B cell (primary cell): ENCODE measurements at regions of chr14 and their contacts with region 1.

Region 1: GRCh38 chr14:69673578-69674305 is 62.3 kb downstream of the SUSD6 start:
- DNase-seq: no peak
- ATAC-seq: peak; percentile 50
- H3K4me3 ChIP-seq: peak overlapping the region in 1 of 5 experiments; percentile 38
- H3K4me3 Mint-ChIP-seq: peak overlapping the region; percentile 73
- H3K27ac ChIP-seq: peak overlapping the region; percentile 27 to 77
- H3K27ac Mint-ChIP-seq: peak overlapping the region; percentile 91
- H3K4me1 ChIP-seq: peaks cover 75 to 80% of the 10 kb centered on the region in 2 donors
- H3K4me1 Mint-ChIP-seq: peaks cover 85% of the 10 kb centered on the region
- H3K27me3 ChIP-seq: no peaks in the 10 kb centered on the region
- H3K27me3 Mint-ChIP-seq: no peaks in the 10 kb centered on the region
- CTCF ChIP-seq: peak; percentile 27

Region 2: GRCh38 chr14:69535230-69535848 is 138.4 kb before region 1 on chr14:
- CTCF ChIA-PET with region 1: no interaction called
- POLR2A ChIA-PET with region 1: no interaction called
- intact Hi-C with region 1: no loop called
- DNase-seq: no peak
- ATAC-seq: no peak
- H3K4me3 ChIP-seq: no peak overlapping the region
- H3K4me3 Mint-ChIP-seq: no peak overlapping the region
- H3K27ac ChIP-seq: no peak overlapping the region
- H3K27ac Mint-ChIP-seq: no peak overlapping the region
- H3K4me1 ChIP-seq: no peaks in the 10 kb centered on the region
- H3K4me1 Mint-ChIP-seq: no peaks in the 10 kb centered on the region
- H3K27me3 ChIP-seq: peaks cover 0 to 15% (median 4%) of the 10 kb centered on the region in 4 experiments
- H3K27me3 Mint-ChIP-seq: peaks cover 43% of the 10 kb centered on the region
- CTCF ChIP-seq: no peak

Region 3: GRCh38 chr14:69637503-69638030 is 36.2 kb before region 1 on chr14:
- CTCF ChIA-PET with region 1: no interaction called
- POLR2A ChIA-PET with region 1: interaction called, 11 read pairs
- intact Hi-C with region 1: loop called (anchors 5 kb)
- DNase-seq: no peak
- ATAC-seq: peak; percentile 19
- H3K4me3 ChIP-seq: peak overlapping the region in 1 of 5 experiments; percentile 9
- H3K4me3 Mint-ChIP-seq: peak overlapping the region; percentile 84
- H3K27ac ChIP-seq: peak overlapping the region; percentile 72 to 78
- H3K27ac Mint-ChIP-seq: peak overlapping the region; percentile 96
- H3K4me1 ChIP-seq: peaks cover 76 to 78% of the 10 kb centered on the region in 2 donors
- H3K4me1 Mint-ChIP-seq: peaks cover 88% of the 10 kb centered on the region
- H3K27me3 ChIP-seq: no peaks in the 10 kb centered on the region
- H3K27me3 Mint-ChIP-seq: no peaks in the 10 kb centered on the region
- CTCF ChIP-seq: no peak

Region 4: GRCh38 chr14:69648477-69649451 is 25.0 kb before region 1 on chr14:
- CTCF ChIA-PET with region 1: interaction called, 8 read pairs
- POLR2A ChIA-PET with region 1: interaction called, 5 read pairs
- intact Hi-C with region 1: loop called (anchors 2 kb)
- DNase-seq: no peak
- ATAC-seq: no peak
- H3K4me3 ChIP-seq: no peak overlapping the region
- H3K4me3 Mint-ChIP-seq: peak overlapping the region; percentile 10
- H3K27ac ChIP-seq: peak overlapping the region; percentile 5 to 93
- H3K27ac Mint-ChIP-seq: peak overlapping the region; percentile 86
- H3K4me1 ChIP-seq: peaks cover 86 to 87% of the 10 kb centered on the region in 2 donors
- H3K4me1 Mint-ChIP-seq: peaks cover 92% of the 10 kb centered on the region
- H3K27me3 ChIP-seq: no peaks in the 10 kb centered on the region
- H3K27me3 Mint-ChIP-seq: no peaks in the 10 kb centered on the region
- CTCF ChIP-seq: no peak

Region 5: GRCh38 chr14:69685716-69686115 is 12.0 kb after region 1 on chr14:
- CTCF ChIA-PET with region 1: interaction called, 11 read pairs
- POLR2A ChIA-PET with region 1: interaction called, 3 read pairs
- intact Hi-C with region 1: loop called (anchors 1 kb)
- DNase-seq: no peak
- ATAC-seq: no peak
- H3K4me3 ChIP-seq: no peak overlapping the region
- H3K4me3 Mint-ChIP-seq: no peak overlapping the region
- H3K27ac ChIP-seq: no peak overlapping the region
- H3K27ac Mint-ChIP-seq: peak overlapping the region; percentile 32
- H3K4me1 ChIP-seq: peaks cover 51 to 53% of the 10 kb centered on the region in 2 donors
- H3K4me1 Mint-ChIP-seq: peaks cover 78% of the 10 kb centered on the region
- H3K27me3 ChIP-seq: no peaks in the 10 kb centered on the region
- H3K27me3 Mint-ChIP-seq: no peaks in the 10 kb centered on the region
- CTCF ChIP-seq: no peak

Region 6: GRCh38 chr14:69708586-69709174 is 34.9 kb after region 1 on chr14:
- CTCF ChIA-PET with region 1: interaction called, 3 read pairs
- POLR2A ChIA-PET with region 1: no interaction called
- intact Hi-C with region 1: loop called (anchors 5 kb)
- DNase-seq: no peak
- ATAC-seq: no peak
- H3K4me3 ChIP-seq: no peak overlapping the region
- H3K4me3 Mint-ChIP-seq: no peak overlapping the region
- H3K27ac ChIP-seq: no peak overlapping the region
- H3K27ac Mint-ChIP-seq: no peak overlapping the region
- H3K4me1 ChIP-seq: peaks cover 14 to 18% of the 10 kb centered on the region in 2 donors
- H3K4me1 Mint-ChIP-seq: peaks cover 39% of the 10 kb centered on the region
- H3K27me3 ChIP-seq: no peaks in the 10 kb centered on the region
- H3K27me3 Mint-ChIP-seq: no peaks in the 10 kb centered on the region
- CTCF ChIP-seq: peak; percentile 25

Region 7: DNA sequence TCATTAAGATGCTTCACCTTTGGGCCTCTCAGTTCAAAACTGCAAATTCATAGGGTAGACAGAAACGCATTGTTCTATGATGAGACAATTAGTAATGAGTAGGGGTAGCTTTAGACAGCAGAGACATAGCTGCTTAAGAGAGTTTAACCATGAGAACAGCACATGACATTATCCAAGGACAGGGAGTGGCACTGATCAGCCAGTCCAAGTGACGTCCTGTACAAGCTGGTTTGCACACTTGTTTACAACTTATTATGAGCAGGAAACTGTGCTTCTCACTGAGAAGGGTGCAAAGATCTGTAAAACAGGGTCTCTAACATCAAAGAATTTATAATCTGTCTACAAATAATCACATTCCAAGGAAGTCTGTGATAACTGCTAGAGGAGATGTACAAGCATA is 82.0 kb after region 1 on chr14:
- CTCF ChIA-PET with region 1: no interaction called
- POLR2A ChIA-PET with region 1: no interaction called
- intact Hi-C with region 1: no loop called
- DNase-seq: no peak
- ATAC-seq: no peak
- H3K4me3 ChIP-seq: no peak overlapping the region
- H3K4me3 Mint-ChIP-seq: no peak overlapping the region
- H3K27ac ChIP-seq: no peak overlapping the region
- H3K27ac Mint-ChIP-seq: no peak overlapping the region
- H3K4me1 ChIP-seq: no peaks in the 10 kb centered on the region
- H3K4me1 Mint-ChIP-seq: peaks cover 7% of the 10 kb centered on the region
- H3K27me3 ChIP-seq: no peaks in the 10 kb centered on the region
- H3K27me3 Mint-ChIP-seq: no peaks in the 10 kb centered on the region
- CTCF ChIP-seq: no peak

Region 8: DNA sequence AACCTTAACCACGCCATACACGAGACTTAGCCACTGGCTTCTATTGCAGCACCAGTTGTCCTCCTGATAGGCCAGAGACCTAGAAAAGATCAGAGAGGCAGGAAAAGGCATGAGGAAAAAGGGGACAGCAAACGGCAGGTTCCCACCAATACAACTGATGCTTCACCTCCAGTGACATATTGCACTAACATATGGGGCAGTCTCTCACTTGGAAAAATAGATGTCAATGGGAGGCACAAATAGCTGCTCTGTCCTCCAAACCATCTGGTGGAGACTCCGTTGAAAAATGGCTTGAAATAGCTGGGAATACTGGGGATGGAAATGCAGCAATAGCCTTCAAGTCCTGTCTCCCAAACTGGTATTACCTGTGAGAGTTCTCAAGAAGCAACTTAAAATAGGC is 494.7 kb after region 1 on chr14:
- CTCF ChIA-PET with region 1: no interaction called
- POLR2A ChIA-PET with region 1: no interaction called
- intact Hi-C with region 1: no loop called
- DNase-seq: no peak
- ATAC-seq: no peak
- H3K4me3 ChIP-seq: no peak overlapping the region
- H3K4me3 Mint-ChIP-seq: no peak overlapping the region
- H3K27ac ChIP-seq: no peak overlapping the region
- H3K27ac Mint-ChIP-seq: no peak overlapping the region
- H3K4me1 ChIP-seq: peaks cover 0 to 4% of the 10 kb centered on the region in 2 donors
- H3K4me1 Mint-ChIP-seq: peaks cover 4% of the 10 kb centered on the region
- H3K27me3 ChIP-seq: peaks cover 0 to 5% (median 0%) of the 10 kb centered on the region in 4 experiments
- H3K27me3 Mint-ChIP-seq: peaks cover 8% of the 10 kb centered on the region
- CTCF ChIP-seq: no peak